Activated T-helper 2 cell treated with anti-CD3 and anti-CD28 coated beads, Interferon-gamma antibody, Interleukin-2, Interleukin-4, amounts not matched to agents 10 μg/mL and 5 μg/mL and 100 μg/mL, durations not matched to agents 14 hours and 24 hours and 36 hours (primary cell): ENCODE measurements at regions of chr1 and their contacts with region 1.

Region 1: GRCh38 chr1:198465201-198466144 is 75.0 kb downstream of the ATP6V1G3 start:
- DNase-seq: no peak
- H3K4me3 Mint-ChIP-seq: no peak overlapping the region
- H3K27ac Mint-ChIP-seq: peak overlapping the region; percentile 12
- H3K4me1 Mint-ChIP-seq: peaks cover 17% of the 10 kb centered on the region
- H3K27me3 Mint-ChIP-seq: no peaks in the 10 kb centered on the region

Region 2: DNA sequence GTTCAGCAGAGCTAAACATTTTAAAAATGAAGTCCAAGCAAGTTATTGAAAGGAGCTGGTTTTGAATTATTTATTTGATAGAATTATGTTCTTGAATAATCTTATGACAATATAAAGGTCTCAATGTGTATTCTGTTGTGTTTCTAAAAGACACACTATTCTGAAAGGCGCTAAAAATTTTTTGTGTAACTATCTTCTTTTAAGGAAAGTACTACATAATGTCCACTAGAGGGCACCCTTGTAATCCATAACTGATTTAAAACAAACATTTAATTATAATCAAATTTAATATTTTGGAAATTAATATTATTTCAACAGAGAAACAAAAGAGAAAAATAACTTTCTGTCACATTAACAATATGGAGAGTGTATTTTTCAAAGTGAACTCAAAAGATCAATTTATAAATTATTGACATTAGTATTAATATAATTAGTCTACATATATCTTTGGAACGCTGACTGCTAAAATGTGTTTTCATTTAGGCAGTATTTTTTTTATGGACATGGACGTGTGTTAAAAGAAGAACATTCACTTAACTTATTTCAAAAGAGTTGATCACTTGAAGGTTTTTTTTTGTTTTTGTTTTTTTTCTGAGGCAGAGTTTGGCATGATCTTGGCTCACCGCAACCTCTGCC is 938.6 kb before region 1 on chr1:
- intact Hi-C with region 1: loop called (anchors 5 kb)
- DNase-seq: no peak
- H3K4me3 Mint-ChIP-seq: no peak overlapping the region
- H3K27ac Mint-ChIP-seq: no peak overlapping the region
- H3K4me1 Mint-ChIP-seq: no peaks in the 10 kb centered on the region
- H3K27me3 Mint-ChIP-seq: no peaks in the 10 kb centered on the region

Region 3: GRCh38 chr1:197614916-197615692 is 850.4 kb before region 1 on chr1:
- intact Hi-C with region 1: loop called (anchors 5 kb)
- DNase-seq: no peak
- H3K4me3 Mint-ChIP-seq: no peak overlapping the region
- H3K27ac Mint-ChIP-seq: no peak overlapping the region
- H3K4me1 Mint-ChIP-seq: no peaks in the 10 kb centered on the region
- H3K27me3 Mint-ChIP-seq: no peaks in the 10 kb centered on the region

Region 4: GRCh38 chr1:197902454-197903195 is 562.8 kb before region 1 on chr1 and contains the start of gene C1orf53:
- intact Hi-C with region 1: no loop called
- DNase-seq: peak; percentile 78
- H3K4me3 Mint-ChIP-seq: peak within 1 kb of the TSS; percentile 82
- H3K27ac Mint-ChIP-seq: peak within 1 kb of the TSS; percentile 70
- H3K4me1 Mint-ChIP-seq: peaks cover 23% of the 10 kb centered on the region
- H3K27me3 Mint-ChIP-seq: peaks cover 64% of the 10 kb centered on the region
- total RNA-seq, gene C1orf53: 2.4 and 2.5 TPM in 2 replicates

Region 5: DNA sequence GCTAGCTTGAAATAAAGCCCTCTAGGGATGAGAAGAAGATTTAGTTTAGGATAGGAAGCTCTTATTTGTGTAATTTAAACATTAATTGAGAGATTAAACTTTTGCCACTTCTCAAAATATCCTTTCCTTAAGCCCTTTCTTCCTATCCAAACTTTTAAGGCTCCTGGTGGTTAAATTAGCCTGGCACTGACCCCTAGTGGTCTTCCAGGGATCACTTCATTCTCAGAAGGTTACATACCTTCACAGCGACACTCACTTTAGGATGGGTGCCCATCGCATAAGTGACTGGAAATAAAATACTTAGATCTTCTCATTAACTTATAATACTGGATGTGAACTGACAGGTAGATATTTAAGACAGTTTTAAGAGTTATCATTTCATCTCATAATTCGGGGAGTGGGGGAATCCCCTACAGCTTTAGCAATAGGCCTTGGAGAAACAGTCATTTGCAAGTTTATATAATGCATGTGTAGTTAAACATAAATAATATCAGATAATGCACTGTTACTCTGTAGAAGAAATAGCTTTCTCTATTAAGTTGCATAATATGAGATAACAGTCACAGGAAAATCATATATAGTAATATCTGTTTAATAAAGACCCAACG is 540.9 kb before region 1 on chr1:
- intact Hi-C with region 1: loop called (anchors 5 kb)
- DNase-seq: no peak
- H3K4me3 Mint-ChIP-seq: no peak overlapping the region
- H3K27ac Mint-ChIP-seq: no peak overlapping the region
- H3K4me1 Mint-ChIP-seq: peaks cover 28% of the 10 kb centered on the region
- H3K27me3 Mint-ChIP-seq: peaks cover 73% of the 10 kb centered on the region

Region 6: DNA sequence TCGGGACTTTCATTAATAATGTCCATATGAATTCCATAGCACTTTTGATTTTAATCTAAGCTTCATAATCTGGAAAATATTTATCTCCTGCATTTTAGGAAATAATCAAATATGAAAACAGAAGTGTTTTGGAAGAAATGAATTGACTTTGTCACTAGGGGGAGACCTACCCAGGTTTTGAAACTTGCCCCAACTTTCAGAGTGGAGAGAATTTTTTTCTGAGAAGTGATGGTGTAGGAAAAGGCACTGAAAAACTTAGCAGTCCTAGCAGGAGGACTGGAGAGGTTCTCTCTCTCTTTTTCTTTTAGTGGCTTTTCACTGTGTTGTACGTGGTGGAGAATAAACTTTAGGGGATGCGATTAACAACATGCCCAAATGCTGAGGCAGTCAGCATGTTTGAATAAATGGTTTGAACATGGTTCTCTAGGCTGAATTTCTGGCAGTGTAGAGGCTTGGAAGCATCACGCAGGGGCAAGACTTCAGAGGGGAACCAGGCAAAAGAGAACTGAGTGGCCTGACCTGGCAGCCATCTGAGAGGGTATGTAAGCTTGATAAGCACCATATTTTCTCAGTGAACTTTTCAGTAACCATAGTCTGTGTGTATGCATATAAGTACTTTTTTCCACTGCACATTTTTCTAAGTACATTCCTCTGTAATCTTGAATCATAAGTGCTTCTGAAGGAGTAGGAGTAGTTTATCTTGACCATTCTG is 377.0 kb before region 1 on chr1:
- intact Hi-C with region 1: loop called (anchors 2 kb)
- DNase-seq: no peak
- H3K4me3 Mint-ChIP-seq: no peak overlapping the region
- H3K27ac Mint-ChIP-seq: no peak overlapping the region
- H3K4me1 Mint-ChIP-seq: peaks cover 8% of the 10 kb centered on the region
- H3K27me3 Mint-ChIP-seq: no peaks in the 10 kb centered on the region

Region 7: GRCh38 chr1:198373376-198373775 is 92.1 kb before region 1 on chr1:
- intact Hi-C with region 1: no loop called
- DNase-seq: no peak
- H3K4me3 Mint-ChIP-seq: no peak overlapping the region
- H3K27ac Mint-ChIP-seq: no peak overlapping the region
- H3K4me1 Mint-ChIP-seq: no peaks in the 10 kb centered on the region
- H3K27me3 Mint-ChIP-seq: peaks cover 3% of the 10 kb centered on the region